CD8-positive, alpha-beta T cell (primary cell): ENCODE measurements at regions of chr17 and their contacts with region 1.

Region 1: DNA sequence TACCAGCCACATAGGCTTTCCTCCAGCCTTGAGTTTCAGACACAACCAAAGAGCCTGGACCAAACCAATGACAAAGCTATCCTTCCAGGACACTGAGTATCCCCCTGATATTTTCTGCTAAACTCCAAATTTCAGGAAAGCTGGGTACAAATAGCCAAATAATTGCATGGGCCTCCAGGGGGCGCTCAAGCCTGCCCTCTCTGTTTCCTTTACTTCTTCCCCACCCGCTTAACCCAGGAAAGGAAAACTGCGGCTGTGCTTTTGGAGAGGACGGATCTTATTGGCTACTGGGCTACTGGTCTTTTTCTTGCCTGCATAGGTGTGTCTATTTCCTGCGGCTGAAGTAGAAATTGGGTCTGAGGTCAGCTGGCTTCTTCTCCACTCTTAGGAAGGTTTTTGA is 30.1 kb downstream of the GNGT2 start:
- DNase-seq: peak; percentile 39 to 82 (median 69)
- ATAC-seq: peak; percentile 42
- H3K4me3 ChIP-seq: no peak overlapping the region
- H3K4me3 Mint-ChIP-seq: no peak overlapping the region
- H3K27ac ChIP-seq: no peak overlapping the region
- H3K27ac Mint-ChIP-seq: no peak overlapping the region
- H3K4me1 ChIP-seq: no peaks in the 10 kb centered on the region
- H3K4me1 Mint-ChIP-seq: peaks cover 4% of the 10 kb centered on the region
- H3K27me3 ChIP-seq: peaks cover 0 to 3% of the 10 kb centered on the region in 2 experiments
- H3K27me3 Mint-ChIP-seq: no peaks in the 10 kb centered on the region
- CTCF ChIP-seq: peak; percentile 89

Region 2: GRCh38 chr17:49201481-49201927 is 21.2 kb after region 1 on chr17:
- CTCF ChIA-PET with region 1: interaction called, 20 read pairs
- POLR2A ChIA-PET with region 1: no interaction called
- intact Hi-C with region 1: no loop called
- DNase-seq: no peak
- ATAC-seq: no peak
- H3K4me3 ChIP-seq: no peak overlapping the region
- H3K4me3 Mint-ChIP-seq: no peak overlapping the region
- H3K27ac ChIP-seq: no peak overlapping the region
- H3K27ac Mint-ChIP-seq: no peak overlapping the region
- H3K4me1 ChIP-seq: no peaks in the 10 kb centered on the region
- H3K4me1 Mint-ChIP-seq: peaks cover 9% of the 10 kb centered on the region
- H3K27me3 ChIP-seq: no peaks in the 10 kb centered on the region
- H3K27me3 Mint-ChIP-seq: no peaks in the 10 kb centered on the region
- CTCF ChIP-seq: no peak

Region 3: GRCh38 chr17:49210158-49211029 is 30.1 kb after region 1 on chr17 and contains the starts of genes ABI3 and GNGT2:
- CTCF ChIA-PET with region 1: interaction called, 16 read pairs
- POLR2A ChIA-PET with region 1: interaction called, 4 read pairs
- intact Hi-C with region 1: no loop called
- DNase-seq: peak in 7 of 9 experiments; percentile 43 to 86 (median 69)
- ATAC-seq: peak; percentile 80
- H3K4me3 ChIP-seq: peak within 1 kb of the TSS; percentile 86 to 87
- H3K4me3 Mint-ChIP-seq: peak within 1 kb of the TSS; percentile 95
- H3K27ac ChIP-seq: peak within 1 kb of the TSS; percentile 61 to 63
- H3K27ac Mint-ChIP-seq: peak within 1 kb of the TSS; percentile 91
- H3K4me1 ChIP-seq: peaks cover 78% of the 10 kb centered on the region
- H3K4me1 Mint-ChIP-seq: peaks cover 71% of the 10 kb centered on the region
- H3K27me3 ChIP-seq: no peaks in the 10 kb centered on the region
- H3K27me3 Mint-ChIP-seq: no peaks in the 10 kb centered on the region
- CTCF ChIP-seq: no peak
- total RNA-seq, gene ABI3: 12.8 to 13.6 TPM
- total RNA-seq, gene GNGT2: 3.7 to 4.1 TPM

Region 4: GRCh38 chr17:49217651-49218413 is 37.5 kb after region 1 on chr17:
- CTCF ChIA-PET with region 1: interaction called, 33 read pairs
- POLR2A ChIA-PET with region 1: interaction called, 4 read pairs
- intact Hi-C with region 1: loop called in 1 of 2 experiments (anchors 2 kb)
- DNase-seq: peak; percentile 60 to 96 (median 80)
- ATAC-seq: peak; percentile 76
- H3K4me3 ChIP-seq: peak overlapping the region; percentile 12 to 24
- H3K4me3 Mint-ChIP-seq: peak overlapping the region; percentile 81
- H3K27ac ChIP-seq: peak overlapping the region; percentile 49 to 80
- H3K27ac Mint-ChIP-seq: peak overlapping the region; percentile 95
- H3K4me1 ChIP-seq: peaks cover 77% of the 10 kb centered on the region
- H3K4me1 Mint-ChIP-seq: peaks cover 71% of the 10 kb centered on the region
- H3K27me3 ChIP-seq: no peaks in the 10 kb centered on the region
- H3K27me3 Mint-ChIP-seq: no peaks in the 10 kb centered on the region
- CTCF ChIP-seq: no peak

Region 5: DNA sequence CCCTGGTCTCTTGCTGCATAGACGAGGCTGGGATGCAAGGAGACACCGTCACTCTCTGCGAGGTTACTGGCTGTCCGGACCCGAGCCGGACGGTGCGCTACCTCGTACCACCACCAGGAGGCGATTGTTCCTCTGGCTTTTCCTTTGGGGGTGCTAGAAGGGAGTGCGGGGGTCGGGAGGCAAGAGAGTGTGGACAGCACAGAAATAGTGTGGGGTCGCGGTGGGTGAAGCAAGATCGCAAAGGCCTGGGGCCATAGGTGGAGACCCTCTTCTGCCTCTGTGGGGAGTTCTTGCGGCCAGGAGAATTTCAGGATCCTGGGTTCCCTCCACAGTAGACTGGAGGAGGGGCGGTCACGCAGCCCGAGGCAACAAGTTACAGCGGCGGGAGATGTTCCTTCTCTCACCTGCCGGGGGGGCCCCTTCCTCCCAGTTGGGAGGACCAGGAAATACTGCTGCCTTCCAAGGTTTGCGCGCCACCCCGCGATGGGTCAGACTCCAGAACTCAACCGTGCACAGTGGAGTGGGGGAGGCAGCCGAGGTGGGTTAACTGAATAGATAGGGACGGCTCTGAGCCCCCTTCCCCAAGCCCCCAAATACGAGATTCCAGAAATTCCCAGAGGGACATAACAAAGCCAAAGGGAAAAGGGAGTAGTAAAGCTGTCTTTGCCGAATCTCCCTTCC is 43.4 kb after region 1 on chr17:
- CTCF ChIA-PET with region 1: interaction called, 355 read pairs
- POLR2A ChIA-PET with region 1: interaction called, 20 read pairs
- intact Hi-C with region 1: loop called (anchors 1 kb)
- DNase-seq: peak; percentile 37 to 84 (median 71)
- ATAC-seq: peak; percentile 19
- H3K4me3 ChIP-seq: peak overlapping the region; percentile 37 to 42
- H3K4me3 Mint-ChIP-seq: peak overlapping the region; percentile 76
- H3K27ac ChIP-seq: no peak overlapping the region
- H3K27ac Mint-ChIP-seq: peak overlapping the region; percentile 66
- H3K4me1 ChIP-seq: peaks cover 53% of the 10 kb centered on the region
- H3K4me1 Mint-ChIP-seq: peaks cover 47% of the 10 kb centered on the region
- H3K27me3 ChIP-seq: no peaks in the 10 kb centered on the region
- H3K27me3 Mint-ChIP-seq: no peaks in the 10 kb centered on the region
- CTCF ChIP-seq: peak; percentile 78

Region 6: GRCh38 chr17:49230636-49231562 is 50.6 kb after region 1 on chr17 and contains the start of gene PHOSPHO1:
- CTCF ChIA-PET with region 1: interaction called, 355 read pairs
- POLR2A ChIA-PET with region 1: interaction called, 20 read pairs
- intact Hi-C with region 1: loop called (anchors 1 kb)
- DNase-seq: peak; percentile 71 to 94 (median 88)
- ATAC-seq: peak; percentile 93
- H3K4me3 ChIP-seq: peak within 1 kb of the TSS; percentile 69 to 91
- H3K4me3 Mint-ChIP-seq: peak within 1 kb of the TSS; percentile 83
- H3K27ac ChIP-seq: no peak within 1 kb of the TSS
- H3K27ac Mint-ChIP-seq: peak within 1 kb of the TSS; percentile 19
- H3K4me1 ChIP-seq: peaks cover 24% of the 10 kb centered on the region
- H3K4me1 Mint-ChIP-seq: peaks cover 14% of the 10 kb centered on the region
- H3K27me3 ChIP-seq: no peaks in the 10 kb centered on the region
- H3K27me3 Mint-ChIP-seq: peaks cover 4% of the 10 kb centered on the region
- CTCF ChIP-seq: no peak
- total RNA-seq, gene PHOSPHO1: not detected

Region 7: DNA sequence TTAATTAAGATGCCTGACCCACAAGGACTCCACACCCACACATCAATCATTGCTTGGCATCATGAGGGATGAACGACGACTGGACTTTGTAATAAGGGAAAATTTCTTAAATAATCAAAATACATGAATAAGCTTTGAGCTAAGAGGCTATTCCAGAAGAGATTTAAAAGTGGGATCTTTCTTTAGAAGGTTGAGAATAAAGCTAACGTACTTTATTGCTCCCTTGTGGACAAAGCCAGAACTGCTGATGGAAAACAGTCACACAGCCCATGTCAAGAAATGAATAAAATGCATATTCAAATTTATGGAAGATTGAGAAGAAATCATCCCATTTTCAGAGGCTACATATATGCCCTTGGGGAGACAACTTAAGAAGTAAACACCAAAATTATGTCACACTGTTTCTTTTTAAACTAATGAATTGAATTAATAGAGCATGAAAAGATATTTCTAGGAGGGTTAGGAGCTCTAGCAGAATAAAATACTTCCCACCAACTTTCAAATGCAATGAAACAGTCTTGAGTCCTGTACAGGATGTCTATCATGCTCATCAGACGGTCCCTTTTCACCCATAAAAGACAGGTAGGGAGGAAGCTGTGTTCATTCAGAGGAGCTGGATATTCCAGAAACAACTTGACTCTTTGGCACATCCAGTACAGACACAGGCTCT is 110.5 kb after region 1 on chr17:
- CTCF ChIA-PET with region 1: interaction called, 16 read pairs
- POLR2A ChIA-PET with region 1: no interaction called
- intact Hi-C with region 1: loop called (anchors 1 kb)
- DNase-seq: peak in 3 of 9 experiments; percentile 15 to 43 (median 34)
- ATAC-seq: no peak
- H3K4me3 ChIP-seq: no peak overlapping the region
- H3K4me3 Mint-ChIP-seq: no peak overlapping the region
- H3K27ac ChIP-seq: no peak overlapping the region
- H3K27ac Mint-ChIP-seq: peak overlapping the region; percentile 28
- H3K4me1 ChIP-seq: no peaks in the 10 kb centered on the region
- H3K4me1 Mint-ChIP-seq: no peaks in the 10 kb centered on the region
- H3K27me3 ChIP-seq: no peaks in the 10 kb centered on the region
- H3K27me3 Mint-ChIP-seq: no peaks in the 10 kb centered on the region
- CTCF ChIP-seq: peak; percentile 72